ENCODE measurements at regions of chrX and their contacts with region 1.

Region 1: DNA sequence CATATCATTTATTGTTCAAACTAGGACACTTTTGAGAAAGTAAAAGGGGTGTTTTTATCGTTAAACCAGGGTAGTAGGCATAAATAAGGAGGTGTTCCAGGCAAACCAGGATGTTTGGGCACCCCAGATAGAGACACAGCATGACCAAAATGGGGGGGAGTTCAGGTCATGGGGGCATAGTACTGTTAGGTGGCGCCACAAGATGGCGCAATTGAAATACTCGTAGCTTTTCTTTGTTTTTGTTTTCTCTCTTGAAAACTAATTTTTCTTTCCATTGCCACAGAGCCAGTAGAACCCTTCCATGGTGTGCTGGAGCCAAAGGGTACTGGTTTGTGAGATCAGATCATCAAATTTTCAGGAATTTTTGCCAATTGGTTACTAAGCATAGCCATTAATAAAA is 283.4 kb downstream of the BCOR start:
- DNase-seq: no peak
- H3K4me3 ChIP-seq: no peak overlapping the region
- H3K27ac ChIP-seq: peak overlapping the region in 14 of 59 donors; percentile 9 to 57 (median 34)
- H3K27me3 ChIP-seq: peaks cover 0 to 87% (median 36%) of the 10 kb centered on the region in 45 donors
- CTCF ChIP-seq: peak in 55 of 56 donors; percentile 15 to 66 (median 44)

Region 2: DNA sequence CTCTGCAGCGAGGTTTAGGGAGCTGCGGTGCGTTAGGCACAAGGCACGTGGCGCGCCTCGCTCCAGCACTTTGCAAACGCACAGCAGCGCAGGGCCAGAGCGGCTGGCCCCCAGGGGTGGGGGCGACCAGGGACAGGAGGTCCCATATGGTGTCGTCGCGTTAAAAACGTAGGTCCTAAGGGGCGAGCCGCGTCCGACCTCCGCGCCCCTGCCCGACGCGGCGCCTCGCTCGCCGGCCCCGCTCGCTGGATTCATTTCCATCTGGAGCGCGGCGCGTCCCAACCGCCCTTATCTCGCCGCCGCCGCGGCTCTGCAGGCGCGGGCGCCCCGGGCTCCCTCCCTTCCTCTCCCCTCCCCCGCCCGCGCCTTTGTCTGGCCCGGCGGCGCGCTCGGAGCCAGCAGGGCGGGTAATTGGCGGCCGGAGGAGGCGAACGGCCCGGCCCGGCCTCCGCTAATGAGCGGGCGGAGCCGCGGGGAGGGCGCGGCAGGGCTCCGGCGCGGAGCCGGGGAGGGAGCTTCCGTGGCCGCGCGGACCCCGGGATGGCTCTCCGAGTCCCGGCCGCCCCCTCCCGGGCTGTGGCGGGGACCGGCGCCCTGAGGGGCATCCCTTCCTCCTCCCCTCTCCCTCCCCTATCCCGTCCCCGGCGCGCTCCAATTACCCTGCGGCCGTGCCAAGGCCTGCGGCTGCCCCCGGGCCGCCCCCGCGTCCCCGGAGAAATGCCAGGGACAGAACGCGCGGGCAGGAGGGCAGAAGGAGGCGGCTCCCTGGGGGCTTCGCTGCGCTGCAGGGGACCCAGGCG is 125.6 kb before region 1 on chrX:
- intact Hi-C with region 1: loop called (anchors 10 kb)
- DNase-seq: peak; percentile 9 to 77 (median 51)
- H3K4me3 ChIP-seq: peak overlapping the region; percentile 18 to 65 (median 48)
- H3K27ac ChIP-seq: peak overlapping the region in 57 of 59 donors; percentile 21 to 89 (median 79)
- H3K27me3 ChIP-seq: peaks cover 0 to 91% (median 10%) of the 10 kb centered on the region in 45 donors
- CTCF ChIP-seq: peak in 2 of 56 donors; percentile 4 to 9

Region 3: DNA sequence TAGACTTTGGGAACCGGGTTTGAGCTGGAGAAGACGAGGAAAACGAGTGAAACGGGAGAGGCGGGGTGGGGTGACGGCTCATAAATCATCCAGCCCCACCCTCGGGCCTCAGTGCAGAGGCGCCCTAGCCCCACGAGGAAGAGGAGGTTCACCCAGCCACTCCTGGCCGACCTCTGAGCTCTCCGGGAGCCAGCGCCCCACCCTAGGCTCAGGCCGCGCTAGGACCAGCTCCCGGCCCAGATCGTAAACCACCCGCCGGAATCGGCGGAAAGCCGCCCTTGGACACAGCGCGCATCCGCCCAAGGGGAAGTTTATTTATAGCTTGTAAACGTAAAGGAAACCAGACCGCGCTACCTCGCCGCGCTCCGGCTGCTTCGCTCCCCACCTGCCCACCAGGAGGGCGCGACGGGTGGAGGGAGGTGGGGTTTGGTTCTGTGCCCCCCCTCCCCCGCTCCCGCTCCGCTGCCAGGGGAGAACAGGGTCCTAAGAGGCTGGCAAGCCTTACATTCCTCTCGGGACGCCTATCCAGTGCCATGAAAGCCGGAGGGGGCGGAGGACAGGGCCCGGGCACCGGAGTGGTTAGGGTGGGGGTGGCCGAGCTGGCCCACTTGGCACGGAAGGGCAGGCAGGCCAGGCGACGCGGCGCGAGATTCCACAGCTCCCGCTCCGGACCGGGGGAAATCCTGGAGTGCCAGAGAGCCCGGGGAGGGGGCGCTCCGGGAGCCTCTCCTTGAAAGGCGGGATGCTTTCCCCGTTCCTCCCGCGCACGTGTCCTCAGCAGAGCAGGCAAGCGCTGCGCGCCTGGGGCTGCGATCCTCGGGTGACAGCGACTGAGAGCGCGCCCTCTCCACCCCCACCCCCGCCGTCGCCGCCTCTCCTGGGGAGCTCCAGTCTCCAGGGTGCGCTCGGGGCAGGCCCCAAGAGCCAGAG is 199.1 kb after region 1 on chrX:
- intact Hi-C with region 1: loop called in 1 of 2 experiments (anchors 5 kb)
- DNase-seq: peak in 8 of 10 donors; percentile 18 to 71 (median 55)
- H3K4me3 ChIP-seq: peak overlapping the region; percentile 23 to 71 (median 56)
- H3K27ac ChIP-seq: peak overlapping the region in 56 of 59 donors; percentile 41 to 89 (median 81)
- H3K27me3 ChIP-seq: peaks cover 0 to 88% (median 37%) of the 10 kb centered on the region in 45 donors
- CTCF ChIP-seq: peak in 1 of 56 donors; percentile 14

Region 4: DNA sequence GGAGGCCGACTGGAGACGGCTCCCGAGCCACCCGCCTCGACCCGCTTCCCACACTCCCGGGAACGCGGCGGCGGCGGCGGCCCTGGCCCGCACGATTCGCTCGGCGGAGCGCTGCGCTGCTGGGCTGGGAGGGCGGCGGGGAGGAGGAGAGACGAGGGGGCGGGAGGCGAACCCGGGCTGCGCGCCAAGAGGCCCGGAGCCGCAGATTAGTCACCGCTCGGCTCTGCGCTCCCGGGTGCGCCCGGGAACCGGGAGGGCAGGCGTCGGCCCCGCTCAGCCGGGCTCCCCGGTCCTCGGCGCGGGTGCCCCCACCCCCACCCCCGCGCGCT is 294.5 kb after region 1 on chrX:
- intact Hi-C with region 1: loop called in 1 of 2 experiments (anchors 10 kb)
- DNase-seq: peak in 7 of 10 donors; percentile 54 to 81 (median 59)
- H3K4me3 ChIP-seq: peak overlapping the region; percentile 12 to 75 (median 58)
- H3K27ac ChIP-seq: peak overlapping the region in 56 of 59 donors; percentile 38 to 92 (median 82)
- H3K27me3 ChIP-seq: peaks cover 0 to 94% (median 49%) of the 10 kb centered on the region in 45 donors
- CTCF ChIP-seq: peak in 1 of 56 donors; percentile 18

Region 5: DNA sequence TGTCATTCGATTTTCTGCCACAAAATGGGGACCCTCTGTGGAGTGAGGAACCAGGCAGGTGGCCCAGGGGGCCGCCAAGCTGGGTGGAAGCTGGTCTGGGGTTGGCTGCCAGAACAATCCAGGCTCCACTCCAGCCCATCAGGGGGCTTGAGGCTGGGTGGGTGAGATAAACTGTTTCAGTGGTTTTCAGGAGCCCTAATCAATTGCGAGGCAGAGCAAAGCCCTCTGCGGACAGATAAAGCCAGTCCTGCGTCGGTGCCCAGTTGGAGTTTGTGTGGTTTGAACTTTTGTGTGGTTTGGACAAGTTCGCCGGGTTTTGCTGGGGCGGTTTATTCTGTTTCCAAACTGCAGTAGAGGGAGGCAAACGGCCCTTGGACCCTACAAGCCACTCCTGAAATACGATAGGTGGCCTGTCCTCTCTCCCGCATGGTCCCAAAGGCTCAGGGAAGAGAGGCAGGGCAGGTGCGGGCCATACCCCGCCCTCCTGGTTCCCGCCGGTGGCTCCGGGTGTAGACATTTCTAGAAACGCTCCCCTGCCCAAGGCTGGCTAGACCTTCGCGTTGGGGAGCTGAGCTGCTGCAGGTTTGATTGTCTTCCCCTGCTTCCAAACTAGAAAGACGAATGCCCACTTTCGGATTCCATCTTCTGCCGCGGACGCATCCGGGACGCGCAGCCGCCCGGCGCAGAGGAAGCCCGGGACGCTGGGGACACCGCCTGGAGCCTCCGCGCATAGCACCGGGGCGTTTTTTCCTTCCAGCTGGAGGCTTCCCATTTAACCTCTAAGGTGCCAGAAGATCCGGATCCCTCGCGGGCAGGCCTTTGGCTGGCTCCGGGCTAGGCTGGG is 452.3 kb after region 1 on chrX:
- intact Hi-C with region 1: loop called (anchors 5 to 10 kb)
- DNase-seq: peak; percentile 39 to 75 (median 53)
- H3K4me3 ChIP-seq: peak overlapping the region; percentile 16 to 75 (median 56)
- H3K27ac ChIP-seq: peak overlapping the region in 44 of 59 donors; percentile 9 to 80 (median 54)
- H3K27me3 ChIP-seq: peaks cover 0 to 74% (median 19%) of the 10 kb centered on the region in 45 donors
- CTCF ChIP-seq: peak; percentile 11 to 76 (median 62)